ENCODE measurements at regions of chr12 and their contacts with region 1.

Region 1: DNA sequence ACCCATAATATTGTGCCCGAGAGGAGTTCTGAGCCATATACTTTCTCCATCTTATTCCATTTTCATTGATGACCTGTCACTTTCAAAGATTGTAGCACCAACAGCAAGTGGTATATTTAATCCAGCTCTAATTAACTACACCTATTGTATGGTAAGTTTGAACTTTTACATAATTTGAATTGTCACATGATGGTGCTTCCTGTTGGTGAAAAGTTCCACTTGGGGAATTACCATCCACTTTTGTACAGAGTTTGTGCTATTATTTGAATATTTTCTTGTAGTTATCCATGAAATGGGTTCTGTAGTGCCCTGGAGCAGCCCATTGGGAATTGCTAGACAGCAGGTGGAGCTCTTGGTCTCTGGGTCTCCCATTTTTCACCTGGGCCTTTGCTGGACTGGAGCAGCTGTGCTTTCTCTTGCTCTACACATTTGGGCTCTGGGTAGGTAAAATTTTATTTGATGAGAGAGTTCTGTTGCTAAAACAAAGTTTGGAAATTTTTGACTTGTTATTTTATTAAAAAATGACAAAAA is 3.0 kb downstream of the SMCO3 start:
- DNase-seq: peak in 1 of 2 experiments; percentile 63
- H3K4me3 ChIP-seq: no peak overlapping the region
- H3K27ac ChIP-seq: no peak overlapping the region
- H3K4me1 ChIP-seq: no peaks in the 10 kb centered on the region
- H3K27me3 ChIP-seq: no peaks in the 10 kb centered on the region
- CTCF ChIP-seq: peak; percentile 66

Region 2: DNA sequence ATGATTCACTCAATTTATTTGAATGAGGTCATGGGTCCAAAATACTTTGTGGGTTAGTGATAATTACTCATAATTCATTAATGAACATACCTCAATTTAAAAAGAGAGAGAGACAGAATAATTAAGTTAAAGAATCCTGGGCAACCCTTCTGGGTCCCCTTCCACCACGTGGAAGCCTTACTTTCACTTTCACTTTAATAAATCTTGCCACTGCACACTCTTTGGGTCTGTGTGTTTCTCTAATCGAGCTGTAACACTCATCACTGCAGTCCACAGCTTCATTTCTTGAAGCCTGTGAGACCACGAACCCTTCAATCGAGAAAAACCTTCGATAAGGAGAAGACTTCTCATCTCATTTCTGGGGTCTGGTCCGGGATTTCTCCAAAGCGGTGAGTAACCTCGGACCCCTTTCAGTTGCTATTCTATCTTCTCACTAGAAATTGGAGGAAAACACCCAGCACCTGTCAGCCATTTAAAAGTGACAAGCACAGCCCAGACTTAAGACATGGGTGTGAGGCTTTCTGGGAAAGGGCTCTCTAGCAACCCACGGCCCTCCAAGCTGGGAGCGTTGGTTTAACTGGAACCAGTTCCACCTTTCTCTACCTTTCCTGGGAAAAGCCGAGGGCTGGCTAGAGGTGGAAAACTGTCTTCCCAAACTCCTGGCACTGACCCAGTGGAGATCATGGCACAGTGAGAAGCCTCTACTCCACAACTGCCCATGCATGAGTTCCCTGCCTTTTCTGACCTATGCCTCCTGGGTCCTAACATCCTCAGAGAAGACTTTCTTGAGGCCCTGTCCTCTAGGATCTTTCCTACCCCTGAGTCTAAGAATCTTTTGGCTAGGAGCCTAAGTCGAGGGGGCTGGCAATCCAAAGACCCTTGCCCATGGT is 594.4 kb before region 1 on chr12:
- CTCF ChIA-PET with region 1: no interaction called
- POLR2A ChIA-PET with region 1: no interaction called
- intact Hi-C with region 1: no loop called
- DNase-seq: no peak
- H3K4me3 ChIP-seq: no peak overlapping the region
- H3K27ac ChIP-seq: no peak overlapping the region
- H3K4me1 ChIP-seq: peaks cover 21% of the 10 kb centered on the region
- H3K27me3 ChIP-seq: no peaks in the 10 kb centered on the region
- CTCF ChIP-seq: no peak

Region 3: GRCh38 chr12:14629832-14630710 is 180.9 kb before region 1 on chr12:
- CTCF ChIA-PET with region 1: interaction called, 3 read pairs
- POLR2A ChIA-PET with region 1: no interaction called
- intact Hi-C with region 1: loop called (anchors 5 kb)
- DNase-seq: peak; percentile 51 to 75
- H3K4me3 ChIP-seq: no peak overlapping the region
- H3K27ac ChIP-seq: no peak overlapping the region
- H3K4me1 ChIP-seq: no peaks in the 10 kb centered on the region
- H3K27me3 ChIP-seq: no peaks in the 10 kb centered on the region
- CTCF ChIP-seq: peak; percentile 94

Region 4: GRCh38 chr12:14893506-14894250 is 82.7 kb after region 1 on chr12:
- CTCF ChIA-PET with region 1: no interaction called
- POLR2A ChIA-PET with region 1: interaction called, 11 read pairs
- intact Hi-C with region 1: no loop called
- DNase-seq: no peak
- H3K4me3 ChIP-seq: no peak overlapping the region
- H3K27ac ChIP-seq: no peak overlapping the region
- H3K4me1 ChIP-seq: no peaks in the 10 kb centered on the region
- H3K27me3 ChIP-seq: no peaks in the 10 kb centered on the region
- CTCF ChIP-seq: no peak

Region 5: GRCh38 chr12:14952299-14952921 is 141.4 kb after region 1 on chr12:
- CTCF ChIA-PET with region 1: no interaction called
- POLR2A ChIA-PET with region 1: interaction called, 30 read pairs
- intact Hi-C with region 1: no loop called
- DNase-seq: peak; percentile 64 to 98
- H3K4me3 ChIP-seq: 0 out of 2 replicates have a peak overlapping the region, but pooled peaks have one; percentile 0
- H3K27ac ChIP-seq: peak overlapping the region; percentile 83
- H3K4me1 ChIP-seq: peaks cover 72% of the 10 kb centered on the region
- H3K27me3 ChIP-seq: no peaks in the 10 kb centered on the region
- CTCF ChIP-seq: no peak

Region 6: GRCh38 chr12:15268927-15269552 is 458.0 kb after region 1 on chr12:
- CTCF ChIA-PET with region 1: no interaction called
- POLR2A ChIA-PET with region 1: no interaction called
- intact Hi-C with region 1: loop called (anchors 1 kb)
- DNase-seq: peak; percentile 53 to 63
- H3K4me3 ChIP-seq: no peak overlapping the region
- H3K27ac ChIP-seq: no peak overlapping the region
- H3K4me1 ChIP-seq: 0 out of 2 replicates have a peak, but pooled peaks cover 2% of the 10 kb centered on the region
- H3K27me3 ChIP-seq: no peaks in the 10 kb centered on the region
- CTCF ChIP-seq: peak; percentile 92

Region 7: DNA sequence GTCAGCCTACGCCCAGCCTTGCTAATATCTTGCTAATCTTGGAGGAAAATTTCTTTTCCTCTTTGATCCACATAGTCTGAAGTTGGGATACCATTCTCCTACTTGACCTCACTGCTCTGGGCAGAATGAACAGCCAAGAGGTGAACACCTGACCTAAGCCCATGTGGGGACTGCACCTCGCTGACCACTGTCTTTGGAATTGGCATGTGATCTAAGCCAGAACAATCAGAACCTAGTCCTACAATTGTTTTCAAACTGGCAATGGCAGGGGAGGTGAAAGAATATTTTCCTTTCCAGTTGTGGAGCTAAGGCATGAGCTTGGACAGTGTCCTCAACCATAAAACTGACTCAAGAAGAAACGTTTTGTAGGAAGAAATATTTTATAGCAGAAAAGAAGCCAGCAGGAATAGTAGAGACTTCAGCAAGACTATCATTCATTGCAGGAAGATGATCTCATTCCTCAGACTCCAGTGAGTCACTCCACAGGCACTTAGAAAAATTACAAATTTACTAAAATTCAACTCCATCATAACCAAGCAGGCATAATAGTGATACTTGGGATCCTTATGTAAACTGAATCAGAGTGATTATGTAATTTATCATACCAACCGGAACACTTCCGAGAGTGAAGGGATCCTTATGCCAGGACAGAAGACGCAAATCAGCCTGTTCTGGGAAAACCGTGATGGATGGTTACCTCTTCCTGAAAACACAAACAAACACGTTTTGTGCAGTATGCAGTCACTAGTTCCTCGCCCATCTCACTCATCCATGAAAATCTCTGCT is 525.9 kb after region 1 on chr12:
- CTCF ChIA-PET with region 1: no interaction called
- POLR2A ChIA-PET with region 1: no interaction called
- intact Hi-C with region 1: no loop called
- DNase-seq: peak in 1 of 2 experiments; percentile 1
- H3K4me3 ChIP-seq: no peak overlapping the region
- H3K27ac ChIP-seq: no peak overlapping the region
- H3K4me1 ChIP-seq: 0 out of 2 replicates have a peak, but pooled peaks cover 10% of the 10 kb centered on the region
- H3K27me3 ChIP-seq: no peaks in the 10 kb centered on the region
- CTCF ChIP-seq: no peak